Gastrocnemius medialis (tissue), 4 donors: ENCODE measurements at regions of chr1 and their contacts with region 1.

Region 1: GRCh38 chr1:202184750-202185460 is 8.7 kb upstream of the LGR6 start:
- DNase-seq: peak; percentile 35 to 62
- ATAC-seq: peak; percentile 66 to 68
- H3K4me3 ChIP-seq: no peak overlapping the region
- H3K27ac ChIP-seq: no peak overlapping the region
- H3K4me1 ChIP-seq: no peaks in the 10 kb centered on the region
- H3K27me3 ChIP-seq: no peaks in the 10 kb centered on the region
- CTCF ChIP-seq: peak; percentile 25 to 90 (median 68)
- POLR2A ChIP-seq: no peak

Region 2: DNA sequence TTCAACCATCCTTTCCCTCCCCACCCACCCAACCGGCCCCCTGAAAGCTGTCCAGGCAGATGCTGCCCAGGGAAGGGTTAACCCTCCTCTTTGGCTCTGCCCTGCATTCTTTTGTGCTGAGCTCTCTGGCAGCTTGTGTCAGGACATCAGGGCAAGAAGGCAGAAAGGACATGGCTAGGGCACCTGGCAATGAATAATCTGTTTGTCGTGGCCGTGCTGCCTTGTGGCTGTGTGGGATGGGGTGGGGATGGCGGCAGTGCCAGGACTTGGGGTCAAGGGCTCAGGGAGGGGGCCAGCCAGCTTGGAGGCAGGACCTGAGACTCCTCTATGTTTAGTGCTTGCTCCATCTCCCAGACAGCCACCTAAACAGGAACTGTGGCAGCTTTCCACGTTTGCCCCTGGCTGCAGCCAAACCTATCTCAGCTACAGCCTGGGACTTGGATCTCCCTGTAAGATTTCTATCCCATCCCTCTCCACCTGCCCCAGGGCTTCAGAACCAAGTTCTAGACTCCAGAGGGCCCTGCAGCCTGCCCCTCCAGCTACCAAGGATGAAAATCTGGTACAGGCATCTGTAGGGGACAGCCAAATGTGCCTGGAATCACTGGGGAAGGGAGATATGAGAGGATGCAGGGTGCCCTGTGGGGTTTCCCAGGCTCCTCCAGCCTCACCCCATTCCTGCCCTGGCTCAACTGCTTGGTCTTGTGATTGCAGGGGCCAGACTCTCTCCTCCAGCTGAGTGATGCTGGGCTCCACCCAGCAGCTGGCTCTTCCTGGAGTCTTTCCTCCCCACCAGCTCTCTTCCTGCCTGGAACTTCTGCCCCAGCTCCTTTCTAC is 71.8 kb before region 1 on chr1:
- in situ Hi-C with region 1: no loop called
- intact Hi-C with region 1: no loop called
- DNase-seq: no peak
- ATAC-seq: peak; percentile 62 to 66
- H3K4me3 ChIP-seq: no peak overlapping the region
- H3K27ac ChIP-seq: peak overlapping the region in 1 of 4 donors; percentile 61
- H3K4me1 ChIP-seq: peaks cover 9 to 14% of the 10 kb centered on the region in 2 donors
- H3K27me3 ChIP-seq: no peaks in the 10 kb centered on the region
- CTCF ChIP-seq: no peak
- POLR2A ChIP-seq: no peak

Region 3: DNA sequence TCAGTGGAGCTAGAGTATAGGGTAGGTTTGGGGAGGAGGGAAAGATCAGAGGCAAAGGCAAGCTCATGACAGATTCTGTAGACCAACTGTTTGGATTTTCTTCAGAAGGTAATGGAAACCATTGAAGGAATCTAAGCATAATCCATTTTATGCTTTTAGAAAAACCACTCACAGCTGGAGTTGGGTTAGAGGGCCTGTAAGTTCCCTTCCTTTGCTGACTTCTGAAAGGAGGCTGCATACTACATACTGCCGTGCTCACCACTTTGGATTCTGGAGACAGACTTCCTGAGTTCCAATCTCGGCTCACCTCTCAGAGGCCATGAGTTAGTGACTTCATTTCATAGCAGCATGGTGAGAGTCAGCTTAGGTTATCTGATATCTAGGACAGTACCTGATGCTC is 531.7 kb after region 1 on chr1:
- in situ Hi-C with region 1: loop called in 3 of 4 experiments (anchors 10 kb)
- intact Hi-C with region 1: loop called (anchors 1 kb)
- DNase-seq: no peak
- ATAC-seq: no peak
- H3K4me3 ChIP-seq: no peak overlapping the region
- H3K27ac ChIP-seq: no peak overlapping the region
- H3K4me1 ChIP-seq: peaks cover 7 to 13% of the 10 kb centered on the region in 2 donors
- H3K27me3 ChIP-seq: peaks cover 0 to 2% (median 0%) of the 10 kb centered on the region in 3 donors
- CTCF ChIP-seq: no peak
- POLR2A ChIP-seq: no peak

Region 4: DNA sequence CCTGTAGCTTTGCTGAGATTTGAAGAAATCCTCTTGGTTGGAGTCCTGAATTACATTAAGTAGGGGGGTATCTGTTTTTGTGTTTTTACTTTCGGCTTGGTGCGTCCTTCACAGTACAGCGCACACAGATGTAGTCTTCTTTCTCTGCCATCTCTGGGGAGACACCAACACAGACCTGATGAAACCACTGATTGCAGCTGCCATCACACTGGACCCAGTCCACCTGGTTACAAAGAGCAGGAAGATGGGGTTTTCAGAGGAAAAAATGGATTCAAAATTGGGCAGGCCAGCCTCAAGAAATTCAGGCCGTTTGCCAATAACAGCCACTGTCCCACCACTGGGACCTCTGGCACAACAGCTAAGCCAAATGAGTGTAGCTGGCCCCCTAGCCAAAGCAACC is 544.0 kb after region 1 on chr1:
- in situ Hi-C with region 1: loop called in 1 of 4 experiments (anchors 10 kb)
- intact Hi-C with region 1: no loop called
- DNase-seq: no peak
- ATAC-seq: no peak
- H3K4me3 ChIP-seq: no peak overlapping the region
- H3K27ac ChIP-seq: no peak overlapping the region
- H3K4me1 ChIP-seq: no peaks in the 10 kb centered on the region
- H3K27me3 ChIP-seq: no peaks in the 10 kb centered on the region
- CTCF ChIP-seq: no peak
- POLR2A ChIP-seq: no peak